Caco-2 (cell line): ENCODE measurements at regions of chr18 and their contacts with region 1.

Region 1: DNA sequence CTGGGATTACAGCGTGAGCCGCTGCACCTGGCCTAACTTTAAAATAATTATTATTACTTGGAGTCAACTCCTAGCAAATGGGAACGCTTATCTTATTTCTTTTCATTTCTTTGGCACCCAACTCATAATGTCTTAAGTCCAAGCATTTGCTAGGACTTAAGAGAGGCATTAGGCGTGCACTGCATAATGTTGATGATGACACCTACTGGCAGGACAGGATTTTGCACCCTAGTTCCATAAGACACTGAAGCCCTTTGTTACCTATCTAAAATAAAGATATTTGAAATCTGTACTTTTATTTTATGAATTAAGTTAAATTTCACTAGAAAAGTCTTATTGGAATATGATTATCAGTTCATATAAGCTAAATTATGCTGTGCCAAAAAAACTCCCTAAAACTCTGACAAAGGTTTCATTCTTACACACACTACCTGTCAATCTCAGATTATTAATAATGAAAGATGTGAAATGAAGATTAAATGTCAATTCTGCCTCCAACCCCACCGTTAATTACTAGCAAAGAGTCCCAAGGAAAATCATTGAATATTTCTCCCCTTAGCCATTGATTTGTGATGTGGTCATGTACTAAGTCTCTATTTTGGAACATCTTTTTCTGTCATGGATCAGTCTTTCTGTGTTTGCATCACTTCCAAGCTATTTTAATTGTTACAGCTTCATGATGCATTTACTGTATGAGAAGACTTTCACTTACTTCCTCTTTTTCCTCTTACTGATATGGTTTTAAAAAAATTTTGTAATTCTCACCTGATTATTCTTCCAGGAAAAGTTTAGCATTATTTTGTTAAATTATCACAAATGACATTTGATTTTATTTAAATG is 12.7 kb upstream of the CDH2 start:
- DNase-seq: peak in 1 of 2 experiments; percentile 42
- H3K4me3 ChIP-seq: no peak overlapping the region
- H3K4me3 Mint-ChIP-seq: no peak overlapping the region
- H3K27ac Mint-ChIP-seq: no peak overlapping the region
- H3K4me1 ChIP-seq: no peaks in the 10 kb centered on the region
- H3K4me1 Mint-ChIP-seq: no peaks in the 10 kb centered on the region
- H3K27me3 ChIP-seq: no peaks in the 10 kb centered on the region
- H3K27me3 Mint-ChIP-seq: no peaks in the 10 kb centered on the region
- CTCF ChIP-seq: peak in 1 of 2 experiments; percentile 29

Region 2: DNA sequence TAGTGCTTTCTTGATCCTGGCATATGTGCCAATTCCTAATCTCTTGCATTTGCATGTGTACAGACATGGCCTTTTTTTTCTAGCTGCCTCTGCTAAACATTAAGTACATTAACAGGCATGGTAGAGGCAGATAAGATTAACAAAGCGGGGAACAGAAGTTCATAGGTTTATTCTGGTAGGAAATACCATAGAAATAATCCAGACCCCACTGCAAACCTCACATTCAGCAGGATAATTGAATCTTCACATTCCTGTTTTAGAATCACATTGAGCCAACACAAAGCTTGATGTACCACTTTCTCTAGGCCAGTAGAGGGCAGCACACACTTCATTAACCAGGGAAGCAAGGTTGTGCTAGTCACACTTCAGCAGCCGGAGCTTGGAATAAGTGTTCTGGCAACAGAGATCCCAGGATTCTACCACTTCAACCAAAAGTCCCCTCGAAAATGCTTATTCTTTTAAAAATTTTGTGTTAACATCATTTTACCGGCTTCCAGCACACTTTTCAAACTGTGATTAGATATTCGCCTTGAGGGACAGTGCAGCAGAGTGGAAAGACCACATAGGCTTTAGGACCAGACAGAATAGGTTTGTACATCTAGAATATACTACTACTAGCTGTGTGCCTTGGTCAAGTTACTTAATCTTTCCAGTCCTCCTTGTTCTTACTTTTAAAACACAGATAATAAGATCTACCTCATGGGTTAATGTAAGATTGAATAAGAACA is 584.3 kb before region 1 on chr18:
- CTCF ChIA-PET with region 1: no interaction called
- POLR2A ChIA-PET with region 1: no interaction called
- intact Hi-C with region 1: loop called (anchors 1 kb)
- DNase-seq: peak; percentile 32 to 46
- H3K4me3 ChIP-seq: no peak overlapping the region
- H3K4me3 Mint-ChIP-seq: no peak overlapping the region
- H3K27ac Mint-ChIP-seq: no peak overlapping the region
- H3K4me1 ChIP-seq: no peaks in the 10 kb centered on the region
- H3K4me1 Mint-ChIP-seq: peaks cover 7% of the 10 kb centered on the region
- H3K27me3 ChIP-seq: no peaks in the 10 kb centered on the region
- H3K27me3 Mint-ChIP-seq: no peaks in the 10 kb centered on the region
- CTCF ChIP-seq: peak; percentile 51 to 53

Region 3: GRCh38 chr18:27685807-27686412 is 503.7 kb before region 1 on chr18:
- CTCF ChIA-PET with region 1: no interaction called
- POLR2A ChIA-PET with region 1: no interaction called
- intact Hi-C with region 1: loop called (anchors 2 kb)
- DNase-seq: peak in 1 of 2 experiments; percentile 31
- H3K4me3 ChIP-seq: no peak overlapping the region
- H3K4me3 Mint-ChIP-seq: no peak overlapping the region
- H3K27ac Mint-ChIP-seq: no peak overlapping the region
- H3K4me1 ChIP-seq: no peaks in the 10 kb centered on the region
- H3K4me1 Mint-ChIP-seq: no peaks in the 10 kb centered on the region
- H3K27me3 ChIP-seq: no peaks in the 10 kb centered on the region
- H3K27me3 Mint-ChIP-seq: no peaks in the 10 kb centered on the region
- CTCF ChIP-seq: peak; percentile 34 to 48

Region 4: DNA sequence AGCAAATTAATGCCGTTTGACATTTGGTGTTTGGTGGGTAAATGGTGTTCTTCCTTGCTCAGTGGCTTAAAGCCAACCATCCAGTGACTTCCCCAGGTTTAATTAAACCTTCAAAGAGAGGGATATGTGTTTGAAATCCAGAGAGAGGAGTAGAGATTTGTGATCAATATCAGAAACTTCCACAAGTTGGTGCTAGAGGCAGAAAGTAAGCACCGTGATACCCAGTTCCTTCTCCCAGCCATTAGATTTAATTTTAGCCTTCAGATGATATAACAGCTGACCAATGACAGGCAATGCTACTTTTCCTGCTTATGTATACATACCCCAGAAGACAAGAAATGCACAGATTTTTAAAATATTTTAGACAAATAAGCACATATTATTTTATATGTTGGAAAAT is 411.2 kb before region 1 on chr18:
- CTCF ChIA-PET with region 1: no interaction called
- POLR2A ChIA-PET with region 1: no interaction called
- intact Hi-C with region 1: loop called (anchors 2 kb)
- DNase-seq: no peak
- H3K4me3 ChIP-seq: no peak overlapping the region
- H3K4me3 Mint-ChIP-seq: no peak overlapping the region
- H3K27ac Mint-ChIP-seq: no peak overlapping the region
- H3K4me1 ChIP-seq: no peaks in the 10 kb centered on the region
- H3K4me1 Mint-ChIP-seq: no peaks in the 10 kb centered on the region
- H3K27me3 ChIP-seq: no peaks in the 10 kb centered on the region
- H3K27me3 Mint-ChIP-seq: no peaks in the 10 kb centered on the region
- CTCF ChIP-seq: peak in 1 of 2 experiments; percentile 35

Region 5: GRCh38 chr18:28013066-28013465 is 176.6 kb before region 1 on chr18:
- CTCF ChIA-PET with region 1: no interaction called
- POLR2A ChIA-PET with region 1: no interaction called
- intact Hi-C with region 1: loop called (anchors 5 kb)
- DNase-seq: no peak
- H3K4me3 ChIP-seq: no peak overlapping the region
- H3K4me3 Mint-ChIP-seq: no peak overlapping the region
- H3K27ac Mint-ChIP-seq: no peak overlapping the region
- H3K4me1 ChIP-seq: no peaks in the 10 kb centered on the region
- H3K4me1 Mint-ChIP-seq: no peaks in the 10 kb centered on the region
- H3K27me3 ChIP-seq: no peaks in the 10 kb centered on the region
- H3K27me3 Mint-ChIP-seq: no peaks in the 10 kb centered on the region
- CTCF ChIP-seq: no peak

Region 6: DNA sequence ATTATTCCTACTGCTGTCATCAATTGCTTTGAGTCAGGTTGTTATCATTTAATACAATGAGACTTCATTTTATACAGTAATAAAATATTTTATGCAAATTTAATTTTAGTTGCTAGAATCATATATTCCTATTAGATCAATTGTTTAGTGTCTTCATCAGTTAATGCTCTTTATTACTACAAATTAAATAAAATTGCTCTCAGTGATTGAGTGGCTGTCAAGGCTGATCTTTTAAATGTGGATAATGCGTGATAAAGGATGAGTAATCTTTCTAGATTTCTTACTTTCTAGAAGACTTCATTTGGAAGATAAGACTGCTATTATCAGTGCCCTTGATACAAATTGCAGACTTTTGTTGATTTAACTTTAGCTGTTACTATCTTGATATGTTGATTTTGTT is 46.9 kb after region 1 on chr18:
- CTCF ChIA-PET with region 1: no interaction called
- POLR2A ChIA-PET with region 1: no interaction called
- intact Hi-C with region 1: no loop called
- DNase-seq: no peak
- H3K4me3 ChIP-seq: no peak overlapping the region
- H3K4me3 Mint-ChIP-seq: no peak overlapping the region
- H3K27ac Mint-ChIP-seq: no peak overlapping the region
- H3K4me1 ChIP-seq: no peaks in the 10 kb centered on the region
- H3K4me1 Mint-ChIP-seq: no peaks in the 10 kb centered on the region
- H3K27me3 ChIP-seq: no peaks in the 10 kb centered on the region
- H3K27me3 Mint-ChIP-seq: no peaks in the 10 kb centered on the region
- CTCF ChIP-seq: no peak

Region 7: GRCh38 chr18:28357766-28358401 is 168.3 kb after region 1 on chr18:
- CTCF ChIA-PET with region 1: no interaction called
- POLR2A ChIA-PET with region 1: no interaction called
- intact Hi-C with region 1: no loop called
- DNase-seq: peak in 1 of 2 experiments; percentile 0
- H3K4me3 ChIP-seq: no peak overlapping the region
- H3K4me3 Mint-ChIP-seq: no peak overlapping the region
- H3K27ac Mint-ChIP-seq: no peak overlapping the region
- H3K4me1 ChIP-seq: no peaks in the 10 kb centered on the region
- H3K4me1 Mint-ChIP-seq: no peaks in the 10 kb centered on the region
- H3K27me3 ChIP-seq: no peaks in the 10 kb centered on the region
- H3K27me3 Mint-ChIP-seq: no peaks in the 10 kb centered on the region
- CTCF ChIP-seq: peak; percentile 13 to 18

Region 8: GRCh38 chr18:28541276-28541930 is 351.8 kb after region 1 on chr18:
- CTCF ChIA-PET with region 1: no interaction called
- POLR2A ChIA-PET with region 1: no interaction called
- intact Hi-C with region 1: loop called (anchors 5 kb)
- DNase-seq: no peak
- H3K4me3 ChIP-seq: no peak overlapping the region
- H3K4me3 Mint-ChIP-seq: no peak overlapping the region
- H3K27ac Mint-ChIP-seq: no peak overlapping the region
- H3K4me1 ChIP-seq: no peaks in the 10 kb centered on the region
- H3K4me1 Mint-ChIP-seq: no peaks in the 10 kb centered on the region
- H3K27me3 ChIP-seq: no peaks in the 10 kb centered on the region
- H3K27me3 Mint-ChIP-seq: no peaks in the 10 kb centered on the region
- CTCF ChIP-seq: no peak